ENCODE measurements at regions of chr7 and their contacts with region 1.

Region 1: DNA sequence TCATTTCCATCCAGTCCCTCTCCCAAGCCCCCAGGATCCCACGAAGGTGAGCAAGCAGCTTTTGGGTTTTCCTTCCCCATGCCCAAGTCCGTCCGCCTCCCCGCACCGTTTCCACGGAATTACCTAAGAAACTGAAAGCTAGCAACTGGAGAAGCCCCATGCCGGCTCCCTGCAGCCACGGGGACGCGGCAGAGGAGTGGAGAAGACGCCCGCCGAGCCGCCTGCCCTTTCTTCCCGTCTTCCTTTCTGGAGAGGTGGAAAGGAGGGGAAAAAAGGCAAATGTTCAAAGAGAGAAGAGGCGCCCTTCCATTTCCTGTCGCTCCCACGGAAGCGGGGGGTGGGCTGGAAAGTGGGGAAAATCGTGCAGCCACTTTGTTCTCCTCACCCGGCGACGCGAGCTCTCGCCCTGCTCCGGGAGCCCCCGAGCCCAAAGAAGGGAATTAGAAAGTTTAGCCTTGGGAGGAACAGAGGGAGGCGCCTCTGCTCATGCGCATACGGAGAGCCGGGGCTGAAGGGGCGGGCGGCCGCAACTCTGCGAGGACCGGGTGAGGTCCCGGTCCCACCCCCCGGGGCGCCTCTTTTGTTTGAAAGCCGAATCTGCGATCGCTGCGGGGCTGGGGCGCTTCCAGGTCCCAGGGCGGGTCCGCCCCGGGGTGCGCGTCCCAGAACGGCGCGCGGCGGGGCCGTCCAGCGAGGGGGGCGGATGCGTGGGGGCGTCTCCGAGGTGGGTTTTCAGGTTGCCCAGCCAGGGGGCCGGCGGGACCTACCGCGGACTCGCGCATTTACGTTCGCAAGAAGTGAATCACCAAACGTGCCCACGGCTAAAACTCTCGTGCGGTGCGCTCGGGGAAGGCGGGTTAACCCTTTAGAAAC is at the start of gene LAMB1:
- DNase-seq: peak; percentile 94
- H3K4me3 ChIP-seq: peak within 1 kb of the TSS; percentile 64 to 81 (median 76)
- H3K27ac ChIP-seq: peak within 1 kb of the TSS; percentile 83 to 87 (median 86)
- H3K4me1 ChIP-seq: peaks cover 0 to 38% (median 36%) of the 10 kb centered on the region in 4 donors
- H3K27me3 ChIP-seq: no peaks in the 10 kb centered on the region
- CTCF ChIP-seq: no peak
- EP300 ChIP-seq: no peak
- POLR2A ChIP-seq: peak; percentile 79 to 83
- total RNA-seq, gene LAMB1: 161 to 246 (median 185) TPM

Region 2: DNA sequence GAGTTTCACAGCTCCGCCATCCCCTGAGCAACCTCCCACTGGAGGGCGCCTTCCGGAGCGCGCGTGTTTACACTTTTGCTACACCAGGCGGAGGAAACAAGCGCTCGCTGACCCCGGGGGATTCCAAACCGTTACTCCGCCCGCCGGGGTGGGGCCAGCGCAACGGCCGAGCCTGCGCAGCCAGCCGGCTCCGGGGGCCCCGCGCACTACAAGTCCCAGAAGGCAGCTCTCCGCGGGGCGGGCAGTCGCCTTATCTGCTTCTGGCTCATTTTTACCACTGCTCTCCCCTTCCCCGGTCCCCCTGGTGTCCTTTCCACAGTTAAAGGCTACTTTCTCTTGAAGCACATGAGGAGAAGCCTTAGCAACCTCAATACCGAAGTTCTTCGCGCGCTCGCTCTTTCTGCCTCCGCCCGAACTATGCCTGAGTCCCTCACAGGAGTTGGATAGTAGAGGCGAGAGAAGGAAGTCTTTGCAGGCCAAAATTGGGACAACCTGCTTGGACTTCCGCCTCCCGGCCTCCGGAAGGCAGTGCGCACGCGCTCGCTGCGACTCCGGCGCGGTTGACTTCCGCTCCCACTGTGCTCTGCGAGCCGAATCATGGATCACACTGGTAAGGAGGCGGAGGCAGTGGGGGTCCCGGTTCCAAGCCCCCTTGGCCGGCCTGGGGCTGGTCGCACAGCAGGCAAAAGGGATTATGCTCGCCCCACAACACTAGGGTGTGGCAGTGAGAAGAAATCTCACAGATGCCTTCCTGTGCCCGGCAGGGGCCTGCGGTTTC is 259.2 kb before region 1 on chr7 and contains the start of gene CBLL1:
- intact Hi-C with region 1: loop called (anchors 10 kb)
- DNase-seq: peak; percentile 98
- H3K4me3 ChIP-seq: peak within 1 kb of the TSS; percentile 72 to 91 (median 82)
- H3K27ac ChIP-seq: peak within 1 kb of the TSS; percentile 84 to 97 (median 92)
- H3K4me1 ChIP-seq: peaks cover 0 to 49% (median 40%) of the 10 kb centered on the region in 4 donors
- H3K27me3 ChIP-seq: no peaks in the 10 kb centered on the region
- CTCF ChIP-seq: peak; percentile 52 to 86 (median 74)
- EP300 ChIP-seq: no peak
- POLR2A ChIP-seq: peak; percentile 39 to 86
- total RNA-seq, gene CBLL1: 25.2 to 47.4 (median 38.9) TPM

Region 3: DNA sequence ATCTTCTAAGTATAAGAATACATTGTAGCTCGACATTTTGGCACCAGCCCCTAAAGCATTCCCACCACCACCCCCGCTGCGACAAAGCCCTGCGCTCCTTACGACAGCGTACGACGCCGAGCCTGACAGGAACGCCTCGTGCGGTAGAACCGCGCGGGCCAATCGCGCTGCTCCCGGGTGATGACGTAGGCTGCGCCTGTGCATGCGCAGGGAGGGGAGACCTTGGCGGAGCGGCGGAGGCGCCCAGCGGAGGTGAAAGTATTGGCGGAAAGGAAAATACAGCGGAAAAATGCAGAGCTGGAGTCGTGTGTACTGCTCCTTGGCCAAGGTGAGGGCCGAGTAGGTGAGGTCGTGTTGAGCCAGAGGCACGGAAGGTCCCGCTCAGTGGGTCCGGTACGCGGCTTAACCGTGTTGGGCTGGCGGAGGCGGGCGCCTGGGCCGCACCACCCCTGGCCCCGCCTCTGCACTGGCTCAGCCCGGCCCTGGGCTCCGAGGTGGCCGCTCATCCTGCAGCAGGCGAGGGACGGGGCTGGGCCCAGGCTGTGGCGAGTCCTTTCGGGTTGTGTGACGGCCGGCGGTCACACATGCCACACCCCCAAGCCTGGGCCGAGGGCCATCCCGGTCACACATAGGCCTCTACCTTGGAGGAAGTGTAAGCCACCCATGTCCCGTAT is 111.9 kb before region 1 on chr7 and contains the start of gene DLD:
- intact Hi-C with region 1: loop called (anchors 5 kb)
- DNase-seq: peak; percentile 98
- H3K4me3 ChIP-seq: peak within 1 kb of the TSS; percentile 73 to 93 (median 78)
- H3K27ac ChIP-seq: peak within 1 kb of the TSS; percentile 90 to 98 (median 95)
- H3K4me1 ChIP-seq: peaks cover 0 to 52% (median 41%) of the 10 kb centered on the region in 4 donors
- H3K27me3 ChIP-seq: no peaks in the 10 kb centered on the region
- CTCF ChIP-seq: no peak
- EP300 ChIP-seq: peak in 2 of 4 donors; percentile 34 to 63
- POLR2A ChIP-seq: peak; percentile 96
- total RNA-seq, gene DLD: 97.2 to 446 (median 124) TPM

Region 4: GRCh38 chr7:107924841-107925504 is 78.0 kb before region 1 on chr7:
- intact Hi-C with region 1: loop called (anchors 5 kb)
- DNase-seq: no peak
- H3K4me3 ChIP-seq: no peak overlapping the region
- H3K27ac ChIP-seq: peak overlapping the region; percentile 16 to 72 (median 50)
- H3K4me1 ChIP-seq: peaks cover 0 to 53% (median 32%) of the 10 kb centered on the region in 4 donors
- H3K27me3 ChIP-seq: no peaks in the 10 kb centered on the region
- CTCF ChIP-seq: no peak
- EP300 ChIP-seq: no peak
- POLR2A ChIP-seq: no peak

Region 5: GRCh38 chr7:107939573-107940489 is 63.1 kb before region 1 on chr7:
- intact Hi-C with region 1: loop called (anchors 5 kb)
- DNase-seq: peak; percentile 90
- H3K4me3 ChIP-seq: no peak overlapping the region
- H3K27ac ChIP-seq: peak overlapping the region; percentile 81 to 90 (median 84)
- H3K4me1 ChIP-seq: peaks cover 0 to 82% (median 66%) of the 10 kb centered on the region in 4 donors
- H3K27me3 ChIP-seq: no peaks in the 10 kb centered on the region
- CTCF ChIP-seq: no peak
- EP300 ChIP-seq: peak in 1 of 4 donors; percentile 25
- POLR2A ChIP-seq: no peak

Region 6: DNA sequence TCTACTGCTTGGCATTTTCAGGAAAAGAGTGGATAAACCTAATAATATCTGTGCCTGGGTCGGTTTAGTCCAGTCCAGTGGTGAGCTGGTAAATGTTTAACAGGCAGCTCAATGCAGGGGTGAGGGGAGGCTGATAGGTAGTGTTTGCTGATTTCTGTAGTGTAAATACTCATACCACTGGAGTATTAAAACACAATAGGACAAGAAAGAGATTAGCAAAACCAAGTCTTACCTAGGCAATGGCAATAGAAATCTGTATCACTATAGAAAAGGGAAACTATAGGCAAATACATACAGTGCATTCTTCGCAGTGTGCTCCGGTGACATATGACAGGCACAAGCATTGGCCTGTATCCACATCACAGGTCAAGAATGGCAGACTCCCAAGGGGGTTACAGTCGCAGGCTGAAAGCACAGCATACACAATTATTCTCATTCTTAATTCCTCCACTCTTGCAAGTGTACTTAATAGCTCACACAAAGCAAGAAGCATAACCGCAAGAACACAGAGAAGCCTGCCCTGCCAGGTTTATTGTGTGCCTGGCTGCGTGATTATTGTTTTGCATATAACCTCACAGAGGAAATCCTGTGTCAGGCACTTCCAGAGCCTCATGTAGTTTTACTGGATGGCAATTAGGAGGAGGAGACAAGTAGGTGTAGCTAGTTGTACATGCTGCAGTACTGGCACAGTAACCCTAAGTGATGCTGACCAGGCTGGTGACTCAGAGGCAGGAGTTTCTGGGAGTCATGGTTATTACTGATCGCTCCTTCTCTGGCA is 92.2 kb after region 1 on chr7:
- intact Hi-C with region 1: loop called (anchors 5 kb)
- DNase-seq: peak; percentile 88
- H3K4me3 ChIP-seq: no peak overlapping the region
- H3K27ac ChIP-seq: peak overlapping the region; percentile 42 to 84 (median 70)
- H3K4me1 ChIP-seq: peaks cover 0 to 29% (median 23%) of the 10 kb centered on the region in 4 donors
- H3K27me3 ChIP-seq: no peaks in the 10 kb centered on the region
- CTCF ChIP-seq: no peak
- EP300 ChIP-seq: peak in 2 of 4 donors; percentile 57 to 89
- POLR2A ChIP-seq: no peak

Region 7: DNA sequence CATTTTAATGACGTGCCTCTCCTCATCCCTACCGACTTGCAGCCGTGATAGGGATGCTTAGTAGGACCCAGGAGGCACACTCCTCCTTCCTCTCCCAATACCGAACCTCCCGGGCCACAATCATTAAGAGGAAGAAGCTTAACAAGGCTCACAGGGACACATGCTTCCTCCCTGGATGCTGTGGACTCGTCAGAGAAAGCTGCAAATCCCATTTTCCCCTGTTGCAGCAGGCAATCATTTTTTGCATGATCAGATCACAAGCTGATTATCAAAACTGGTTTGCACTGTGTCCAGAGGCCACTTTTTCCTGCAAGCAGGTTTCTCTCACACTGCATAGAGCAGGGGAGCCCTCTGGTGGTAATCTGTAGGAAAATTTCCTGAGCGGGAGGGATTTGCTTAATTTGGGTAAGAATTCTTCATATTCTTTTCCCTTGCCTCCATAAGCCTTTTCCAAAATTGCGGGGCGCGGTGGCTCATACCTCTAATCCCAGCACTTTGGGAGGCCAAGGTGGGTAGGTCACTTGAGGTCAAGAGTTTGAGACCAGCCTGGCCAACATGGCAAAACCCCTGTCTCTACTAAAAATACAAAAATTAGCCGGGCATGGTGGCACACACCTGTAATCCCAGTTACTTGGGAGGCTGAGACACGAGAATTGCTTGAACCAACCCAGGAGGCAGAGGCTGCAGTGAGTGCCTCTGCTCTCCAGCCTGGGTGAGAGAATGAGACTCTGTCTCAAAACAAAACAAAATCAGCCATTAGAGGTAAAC is 143.3 kb after region 1 on chr7:
- intact Hi-C with region 1: loop called (anchors 5 kb)
- DNase-seq: peak; percentile 78
- H3K4me3 ChIP-seq: peak overlapping the region in 3 of 4 donors; percentile 13 to 31 (median 28)
- H3K27ac ChIP-seq: peak overlapping the region in 2 of 4 donors; percentile 16 to 41
- H3K4me1 ChIP-seq: peaks cover 0 to 26% (median 16%) of the 10 kb centered on the region in 4 donors
- H3K27me3 ChIP-seq: no peaks in the 10 kb centered on the region
- CTCF ChIP-seq: peak; percentile 80 to 93 (median 88)
- EP300 ChIP-seq: no peak
- POLR2A ChIP-seq: no peak

Region 8: DNA sequence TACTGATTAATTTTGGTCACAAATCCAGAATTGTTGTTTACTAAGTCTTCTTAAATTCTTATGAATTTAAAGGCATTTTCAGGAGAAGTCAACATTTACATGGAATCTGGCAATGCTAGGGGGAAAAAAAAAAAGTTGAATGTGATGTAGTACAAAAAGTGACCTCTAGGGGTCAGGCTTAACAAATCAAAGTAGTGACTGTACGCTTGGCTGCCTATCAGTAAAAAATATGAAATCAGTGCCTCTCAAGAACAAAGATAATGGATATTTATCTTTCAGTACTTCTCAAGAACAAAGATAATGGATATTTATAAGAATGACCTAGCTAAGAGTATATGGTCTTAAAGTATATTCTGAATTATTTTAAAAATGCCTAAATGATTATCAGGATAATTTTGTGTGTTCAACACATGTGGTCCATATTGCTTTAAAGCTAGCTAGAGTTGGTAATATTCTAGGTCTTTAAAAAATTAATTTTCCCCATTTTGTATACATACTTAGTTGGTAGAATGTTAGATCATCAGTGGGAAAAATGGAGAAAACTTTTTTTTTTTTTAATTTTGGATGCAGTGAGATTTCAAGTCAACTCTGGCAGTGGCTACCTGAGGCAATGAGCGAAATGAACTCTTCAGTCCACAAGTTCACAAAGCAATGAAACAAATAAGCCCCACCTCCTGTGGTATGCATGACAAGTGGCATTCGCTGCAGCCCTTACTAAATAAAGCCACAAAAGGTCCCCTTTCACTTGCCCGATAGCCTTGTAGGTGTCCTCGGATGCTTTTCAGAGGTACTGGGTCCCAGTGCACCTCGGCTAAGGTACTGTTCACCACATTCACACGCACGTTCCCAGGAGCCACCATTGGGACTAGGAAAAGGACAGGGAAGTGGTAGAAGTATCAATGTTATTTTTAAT is 178.4 kb after region 1 on chr7:
- intact Hi-C with region 1: no loop called
- DNase-seq: no peak
- H3K4me3 ChIP-seq: no peak overlapping the region
- H3K27ac ChIP-seq: no peak overlapping the region
- H3K4me1 ChIP-seq: no peaks in the 10 kb centered on the region
- H3K27me3 ChIP-seq: no peaks in the 10 kb centered on the region
- CTCF ChIP-seq: peak in 3 of 4 experiments; percentile 45 to 77 (median 47)
- EP300 ChIP-seq: no peak
- POLR2A ChIP-seq: no peak

Measured in sigmoid colon (tissue), 7 donors.